Activated CD4-positive, alpha-beta memory T cell treated with anti-CD3 and anti-CD28 coated beads, Interleukin-2, amount 10 ng/mL, durations not matched to agents 7 days and 5 days (primary cell): ENCODE measurements at regions of chr5 and their contacts with region 1.

Region 1: DNA sequence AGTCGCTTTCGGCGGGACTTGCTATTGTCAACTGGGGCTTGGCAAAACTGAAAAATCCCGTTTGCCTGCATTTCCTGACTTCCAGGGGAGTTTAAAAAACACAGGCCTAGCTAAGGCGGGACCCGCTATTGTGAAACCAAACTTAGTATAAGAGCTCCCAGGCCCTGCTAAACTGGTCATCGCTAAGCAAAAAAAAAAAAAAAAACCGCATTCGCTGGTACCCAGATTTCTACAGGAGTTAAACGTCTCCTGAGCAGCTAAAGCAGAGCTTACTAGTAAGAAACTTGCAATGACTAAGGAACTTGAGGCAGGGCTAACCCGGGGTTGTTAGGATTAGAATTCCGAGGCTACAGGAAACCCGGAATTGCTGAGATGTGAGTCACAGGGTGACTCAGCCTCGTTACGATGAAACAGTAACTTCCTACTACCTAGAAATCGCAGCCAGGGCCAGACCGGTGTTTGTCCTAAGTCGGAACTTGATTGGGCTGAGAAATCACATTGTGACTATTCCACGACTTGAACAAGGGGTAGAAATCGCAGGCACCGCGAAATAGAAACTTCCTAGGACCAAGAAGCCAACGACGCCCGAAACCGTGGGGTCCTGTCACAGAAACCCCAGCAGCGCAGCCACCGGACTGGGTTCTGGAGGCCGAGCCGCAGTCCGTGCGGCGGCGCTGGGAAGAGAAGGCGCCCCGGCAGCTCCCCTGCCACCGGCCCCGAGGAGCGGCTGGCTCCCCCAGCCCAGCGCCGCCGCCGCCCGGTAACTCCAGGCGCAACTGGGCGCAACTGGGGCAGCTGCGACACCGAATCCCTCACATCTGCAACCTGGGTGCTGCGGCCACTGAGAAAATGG is 89.5 kb downstream of the ANXA2R start:
- DNase-seq: peak; percentile 77
- H3K4me3 Mint-ChIP-seq: peak overlapping the region; percentile 85
- H3K27ac Mint-ChIP-seq: peak overlapping the region; percentile 100
- H3K4me1 Mint-ChIP-seq: peaks cover 37% of the 10 kb centered on the region
- H3K27me3 Mint-ChIP-seq: no peaks in the 10 kb centered on the region

Region 2: GRCh38 chr5:42900734-42901133 is 49.9 kb before region 1 on chr5:
- CTCF ChIA-PET with region 1: no interaction called
- POLR2A ChIA-PET with region 1: interaction called, 13 read pairs
- DNase-seq: no peak
- H3K4me3 Mint-ChIP-seq: no peak overlapping the region
- H3K27ac Mint-ChIP-seq: no peak overlapping the region
- H3K4me1 Mint-ChIP-seq: no peaks in the 10 kb centered on the region
- H3K27me3 Mint-ChIP-seq: peaks cover 19% of the 10 kb centered on the region

Region 3: DNA sequence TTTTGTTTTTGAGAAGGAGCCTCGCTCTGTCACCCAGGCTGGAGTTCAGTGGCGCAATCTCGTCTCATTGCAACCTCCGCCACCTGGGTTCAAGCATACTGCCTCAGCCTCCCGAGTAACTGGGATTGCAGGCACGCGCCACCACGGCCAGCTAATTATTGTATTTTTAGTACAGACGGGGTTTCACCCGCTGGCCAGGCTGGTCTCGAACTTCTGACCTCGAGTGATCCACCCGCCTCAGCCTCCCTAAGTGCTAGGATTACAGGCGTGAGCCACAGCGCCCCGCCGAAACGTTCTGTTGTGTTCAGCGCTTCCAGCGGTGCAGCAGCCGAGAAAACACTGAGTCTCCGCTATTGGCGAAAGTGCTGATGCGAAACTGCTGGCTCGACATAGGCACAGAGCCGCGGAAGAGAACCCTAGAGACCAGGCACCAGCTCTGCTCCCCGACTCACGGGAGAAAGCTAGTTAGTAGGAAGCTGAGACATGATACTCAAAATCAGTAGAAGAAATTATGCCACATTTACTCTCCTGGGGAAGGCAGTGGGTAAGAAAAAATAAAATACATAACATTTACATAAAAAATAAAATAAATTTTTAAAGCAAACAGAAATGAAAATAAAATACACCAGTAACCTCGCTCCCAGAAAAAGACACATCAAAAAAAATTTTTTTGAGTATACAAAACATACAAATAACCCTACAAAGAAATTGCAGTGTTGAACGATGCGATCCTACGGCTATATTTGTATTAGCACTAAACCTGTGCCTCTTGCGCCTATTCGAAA is 57.9 kb after region 1 on chr5:
- CTCF ChIA-PET with region 1: interaction called, 9 read pairs
- POLR2A ChIA-PET with region 1: interaction called, 104 read pairs
- DNase-seq: peak; percentile 93
- H3K4me3 Mint-ChIP-seq: peak overlapping the region; percentile 89
- H3K27ac Mint-ChIP-seq: peak overlapping the region; percentile 97
- H3K4me1 Mint-ChIP-seq: peaks cover 39% of the 10 kb centered on the region
- H3K27me3 Mint-ChIP-seq: peaks cover 5% of the 10 kb centered on the region